Mammary epithelial cell (primary cell): ENCODE measurements at regions of chr2 and their contacts with region 1.

Region 1: GRCh38 chr2:71358931-71359671 is 27.5 kb downstream of the ZNF638 start:
- DNase-seq: peak; percentile 73
- H3K4me3 ChIP-seq: no peak overlapping the region
- H3K27ac ChIP-seq: no peak overlapping the region
- H3K4me1 ChIP-seq: no peaks in the 10 kb centered on the region
- H3K27me3 ChIP-seq: no peaks in the 10 kb centered on the region
- CTCF ChIP-seq: no peak

Region 2: GRCh38 chr2:71064754-71065621 is 294.1 kb before region 1 on chr2:
- CTCF ChIA-PET with region 1: no interaction called
- dilution Hi-C with region 1: no loop called
- in situ Hi-C with region 1: no loop called
- intact Hi-C with region 1: no loop called
- DNase-seq: no peak
- H3K4me3 ChIP-seq: no peak overlapping the region
- H3K27ac ChIP-seq: no peak overlapping the region
- H3K4me1 ChIP-seq: peaks cover 28% of the 10 kb centered on the region
- H3K27me3 ChIP-seq: no peaks in the 10 kb centered on the region
- CTCF ChIP-seq: no peak

Region 3: DNA sequence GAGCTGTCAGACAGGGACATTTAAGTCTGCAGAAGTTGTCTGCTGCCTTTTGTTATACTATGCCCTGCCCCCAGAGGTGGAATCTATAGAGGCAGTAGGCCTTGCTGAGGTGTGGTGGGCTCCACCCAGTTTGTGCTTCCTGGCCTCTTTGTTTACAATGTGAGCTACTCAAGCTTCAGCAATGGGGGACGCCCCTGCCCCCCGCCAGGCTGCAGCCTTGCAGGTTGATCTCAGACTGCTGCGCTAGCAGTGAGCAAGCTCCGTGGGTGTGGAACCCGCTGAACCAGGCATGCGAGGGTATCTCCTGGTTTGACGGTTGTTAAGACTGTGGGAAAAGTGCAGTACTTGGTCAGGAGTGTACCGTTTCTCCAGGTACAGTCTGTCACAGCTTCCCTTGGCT is 108.2 kb before region 1 on chr2:
- CTCF ChIA-PET with region 1: no interaction called
- dilution Hi-C with region 1: loop called (anchors 5 kb)
- in situ Hi-C with region 1: no loop called
- intact Hi-C with region 1: no loop called
- DNase-seq: no peak
- H3K4me3 ChIP-seq: no peak overlapping the region
- H3K27ac ChIP-seq: no peak overlapping the region
- H3K4me1 ChIP-seq: no peaks in the 10 kb centered on the region
- H3K27me3 ChIP-seq: peaks cover 2% of the 10 kb centered on the region
- CTCF ChIP-seq: no peak

Region 4: GRCh38 chr2:71395471-71395870 is 36.4 kb after region 1 on chr2:
- CTCF ChIA-PET with region 1: no interaction called
- dilution Hi-C with region 1: loop called (anchors 5 kb)
- in situ Hi-C with region 1: no loop called
- intact Hi-C with region 1: no loop called
- DNase-seq: no peak
- H3K4me3 ChIP-seq: no peak overlapping the region
- H3K27ac ChIP-seq: no peak overlapping the region
- H3K4me1 ChIP-seq: no peaks in the 10 kb centered on the region
- H3K27me3 ChIP-seq: no peaks in the 10 kb centered on the region
- CTCF ChIP-seq: no peak